Activated CD8-positive, alpha-beta T cell treated with anti-CD3 and anti-CD28 coated beads, Interleukin-2, amount 10 ng/mL, durations not matched to agents 7 days and 5 days (primary cell): ENCODE measurements at regions of chr22 and their contacts with region 1.

Region 1: DNA sequence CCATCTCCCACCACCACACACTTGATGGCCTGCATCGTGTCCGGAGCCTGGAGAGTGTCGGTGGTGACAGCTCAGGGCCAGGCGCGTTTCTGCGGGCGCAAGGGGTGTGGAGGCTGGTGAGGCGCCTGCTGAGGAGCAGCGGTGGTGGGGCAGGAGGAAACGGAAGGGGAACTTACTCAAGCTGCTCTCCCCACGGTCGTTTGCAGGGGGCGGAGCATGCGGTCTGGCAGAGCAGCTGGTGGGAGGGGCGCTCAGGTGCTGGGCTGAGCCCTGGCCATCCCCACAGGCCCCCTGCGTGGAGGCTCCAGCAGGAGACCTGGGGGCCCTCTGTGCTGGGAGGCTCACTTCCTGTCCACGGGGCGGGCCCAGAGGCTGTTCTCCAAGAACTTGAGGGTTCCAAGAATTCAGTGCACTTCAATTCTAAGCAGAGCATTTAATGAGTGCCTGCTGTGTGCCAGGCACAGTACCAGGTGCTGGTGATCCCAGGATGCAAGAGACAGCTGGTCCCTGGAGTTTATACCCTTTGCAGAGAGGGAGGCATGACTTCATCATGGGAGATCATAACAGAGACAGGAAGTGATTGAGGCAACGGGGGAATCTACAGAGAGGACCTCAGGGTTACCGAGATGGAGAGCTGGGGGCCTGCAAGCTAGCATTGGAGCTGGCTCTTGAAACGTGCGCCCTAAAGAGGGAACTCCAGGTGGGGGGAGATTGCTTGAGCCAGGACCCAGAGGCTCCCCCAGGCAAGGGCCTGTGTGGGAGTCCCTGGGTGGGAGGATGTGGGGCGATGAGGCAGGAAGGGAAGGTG is at the start of gene RAC2:
- DNase-seq: peak; percentile 98
- ATAC-seq: peak; percentile 62
- H3K4me3 Mint-ChIP-seq: peak within 1 kb of the TSS; percentile 99
- H3K27ac Mint-ChIP-seq: peak within 1 kb of the TSS; percentile 99
- H3K4me1 Mint-ChIP-seq: peaks cover 45% of the 10 kb centered on the region
- H3K27me3 Mint-ChIP-seq: no peaks in the 10 kb centered on the region
- total RNA-seq, gene RAC2: 1,167 to 1,252 TPM

Region 2: DNA sequence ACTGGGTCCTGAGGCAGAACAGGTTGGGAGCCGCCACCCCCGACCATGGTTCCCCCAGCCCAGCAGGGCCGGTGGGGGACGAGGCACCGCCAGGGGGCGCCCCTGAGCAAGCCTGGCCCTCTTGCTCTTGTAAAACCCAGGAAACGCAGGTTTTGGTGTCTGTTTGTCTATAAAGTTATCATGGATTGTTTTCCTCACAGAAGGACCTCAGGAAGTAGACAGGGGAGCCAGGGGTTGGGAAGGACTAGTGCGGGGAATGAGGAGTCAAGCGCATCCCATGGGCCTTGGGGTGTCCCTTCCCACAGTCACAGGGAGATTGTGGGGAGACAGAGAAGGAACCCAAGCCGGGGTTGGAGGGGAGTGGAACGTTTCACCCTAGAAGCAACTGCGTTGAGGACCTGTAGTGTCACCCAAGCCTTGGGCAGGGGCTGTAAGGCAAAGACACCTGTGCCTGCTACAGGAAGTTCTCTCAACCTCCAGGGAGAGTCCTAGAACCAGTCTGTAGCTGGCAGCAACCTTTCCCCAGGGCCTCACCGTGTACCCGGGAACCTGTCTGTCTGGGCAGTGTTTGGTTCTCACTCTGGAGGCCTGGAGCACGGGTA is 166.3 kb before region 1 on chr22:
- CTCF ChIA-PET with region 1: interaction called, 5 read pairs
- POLR2A ChIA-PET with region 1: interaction called, 24 read pairs
- DNase-seq: peak; percentile 89
- ATAC-seq: peak; percentile 20
- H3K4me3 Mint-ChIP-seq: peak overlapping the region; percentile 72
- H3K27ac Mint-ChIP-seq: peak overlapping the region; percentile 99
- H3K4me1 Mint-ChIP-seq: peaks cover 69% of the 10 kb centered on the region
- H3K27me3 Mint-ChIP-seq: no peaks in the 10 kb centered on the region

Region 3: DNA sequence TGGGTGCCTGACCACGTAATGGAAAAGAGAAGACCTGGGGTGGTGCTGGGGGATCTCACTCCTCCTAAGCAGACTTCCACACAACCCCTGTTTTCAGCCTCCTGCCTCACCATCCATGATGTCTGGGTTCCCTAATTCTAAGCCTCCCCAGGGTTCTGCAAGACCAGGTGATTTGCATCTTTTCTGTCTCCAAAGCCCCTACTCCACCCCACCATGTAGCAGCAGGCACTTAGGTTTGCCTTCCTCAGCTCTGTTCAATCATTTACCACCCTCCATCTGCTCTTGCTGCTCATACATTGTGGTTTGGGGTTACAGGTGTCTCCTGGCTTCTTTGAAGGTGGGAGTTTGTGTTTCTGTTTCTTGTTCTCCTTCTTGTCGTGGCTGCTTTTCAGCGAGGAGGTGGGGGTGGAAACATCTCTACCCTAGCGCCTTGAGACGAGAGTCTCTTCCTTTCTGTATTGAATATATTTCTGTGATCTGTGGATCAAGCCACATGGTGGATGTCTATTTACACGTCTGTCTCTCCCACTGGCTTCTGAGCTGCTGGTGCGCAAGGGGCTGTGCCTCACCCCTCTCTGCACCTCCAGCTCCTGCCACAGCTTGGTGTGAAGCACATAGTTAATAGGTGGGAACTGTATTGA is 25.4 kb before region 1 on chr22:
- CTCF ChIA-PET with region 1: interaction called, 12 read pairs
- POLR2A ChIA-PET with region 1: interaction called, 249 read pairs
- DNase-seq: peak; percentile 86
- ATAC-seq: peak; percentile 76
- H3K4me3 Mint-ChIP-seq: peak overlapping the region; percentile 66
- H3K27ac Mint-ChIP-seq: peak overlapping the region; percentile 87
- H3K4me1 Mint-ChIP-seq: peaks cover 80% of the 10 kb centered on the region
- H3K27me3 Mint-ChIP-seq: no peaks in the 10 kb centered on the region

Region 4: DNA sequence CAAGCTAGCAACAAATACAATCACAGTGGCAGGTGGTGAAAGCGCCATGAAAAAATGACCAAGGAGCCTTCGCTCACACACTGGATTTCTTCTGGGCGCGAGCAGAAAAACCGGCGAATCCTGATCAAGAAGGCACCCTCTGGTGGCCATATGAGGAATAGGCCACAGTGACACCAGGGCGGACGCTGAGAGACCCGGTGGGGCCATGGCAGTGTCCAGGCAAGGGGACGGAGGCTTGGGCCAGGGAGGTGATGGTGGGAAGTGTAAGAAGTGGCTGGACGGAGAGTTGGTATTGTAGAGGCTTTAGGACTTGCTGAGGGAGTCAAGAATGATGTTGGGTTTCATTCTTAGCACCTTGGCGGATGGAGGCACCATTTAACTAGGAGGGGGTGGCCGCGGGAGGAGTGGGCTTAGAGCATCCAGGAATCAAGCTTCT is 16.6 kb after region 1 on chr22:
- CTCF ChIA-PET with region 1: interaction called, 195 read pairs
- POLR2A ChIA-PET with region 1: interaction called, 50 read pairs
- DNase-seq: peak; percentile 75
- ATAC-seq: peak; percentile 73
- H3K4me3 Mint-ChIP-seq: no peak overlapping the region
- H3K27ac Mint-ChIP-seq: peak overlapping the region; percentile 50
- H3K4me1 Mint-ChIP-seq: peaks cover 26% of the 10 kb centered on the region
- H3K27me3 Mint-ChIP-seq: peaks cover 4% of the 10 kb centered on the region

Region 5: DNA sequence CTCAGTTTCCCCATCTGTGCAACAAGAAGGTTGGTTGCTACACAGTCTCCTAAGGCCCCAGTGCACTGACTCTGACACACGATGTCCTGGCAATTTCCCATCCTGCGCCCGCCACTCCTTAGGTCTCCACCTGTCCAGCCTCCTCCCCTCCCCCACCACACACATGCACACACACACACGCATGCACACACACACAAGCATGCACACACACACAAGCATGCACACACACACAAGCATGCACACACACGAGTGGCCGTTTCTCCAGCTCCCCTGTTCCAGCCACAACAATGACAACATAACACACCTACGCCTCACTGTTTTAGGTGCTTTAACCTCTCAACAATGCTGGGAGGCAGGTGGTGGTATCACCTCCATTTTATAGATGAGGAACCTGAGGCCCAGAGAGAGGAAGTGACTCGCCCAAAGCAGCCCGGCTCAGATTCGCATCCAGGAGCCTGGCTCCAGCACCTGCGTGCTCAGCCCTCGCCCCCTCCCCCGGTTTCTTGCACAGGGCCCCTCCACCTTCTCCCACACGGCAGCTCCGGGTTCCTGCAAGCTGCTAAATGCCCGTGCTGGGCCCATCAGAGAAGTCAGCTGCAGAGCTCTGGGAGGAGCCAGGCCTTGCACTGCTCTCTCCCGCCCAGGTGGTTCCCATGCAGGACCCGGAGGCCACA is 51.0 kb after region 1 on chr22:
- CTCF ChIA-PET with region 1: interaction called, 3 read pairs
- POLR2A ChIA-PET with region 1: interaction called, 12 read pairs
- DNase-seq: peak; percentile 34
- ATAC-seq: peak; percentile 29
- H3K4me3 Mint-ChIP-seq: no peak overlapping the region
- H3K27ac Mint-ChIP-seq: peak overlapping the region; percentile 78
- H3K4me1 Mint-ChIP-seq: peaks cover 90% of the 10 kb centered on the region
- H3K27me3 Mint-ChIP-seq: no peaks in the 10 kb centered on the region

Region 6: DNA sequence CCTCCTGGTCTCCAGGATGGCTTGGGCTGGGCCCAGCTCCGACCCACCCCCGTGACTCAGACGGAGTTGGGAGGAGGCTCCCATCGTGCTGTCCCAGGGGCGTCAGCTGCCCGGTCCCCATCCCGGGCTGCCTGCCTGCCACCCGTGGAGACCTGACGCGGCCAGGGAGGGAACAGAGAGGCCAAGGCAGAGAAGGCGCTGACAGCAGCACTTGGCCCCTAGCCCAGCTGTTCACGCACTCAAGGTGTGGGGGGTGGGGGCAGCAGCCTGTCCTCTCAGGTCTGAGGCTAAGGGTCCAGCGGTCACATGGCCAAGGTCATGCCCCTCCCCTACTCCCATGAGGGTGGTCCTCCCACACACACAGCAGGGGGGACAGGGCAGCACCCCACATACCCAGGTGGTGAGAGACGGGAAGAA is 134.3 kb after region 1 on chr22:
- CTCF ChIA-PET with region 1: no interaction called
- POLR2A ChIA-PET with region 1: no interaction called
- DNase-seq: no peak
- ATAC-seq: no peak
- H3K4me3 Mint-ChIP-seq: no peak overlapping the region
- H3K27ac Mint-ChIP-seq: no peak overlapping the region
- H3K4me1 Mint-ChIP-seq: no peaks in the 10 kb centered on the region
- H3K27me3 Mint-ChIP-seq: peaks cover 18% of the 10 kb centered on the region

Region 7: DNA sequence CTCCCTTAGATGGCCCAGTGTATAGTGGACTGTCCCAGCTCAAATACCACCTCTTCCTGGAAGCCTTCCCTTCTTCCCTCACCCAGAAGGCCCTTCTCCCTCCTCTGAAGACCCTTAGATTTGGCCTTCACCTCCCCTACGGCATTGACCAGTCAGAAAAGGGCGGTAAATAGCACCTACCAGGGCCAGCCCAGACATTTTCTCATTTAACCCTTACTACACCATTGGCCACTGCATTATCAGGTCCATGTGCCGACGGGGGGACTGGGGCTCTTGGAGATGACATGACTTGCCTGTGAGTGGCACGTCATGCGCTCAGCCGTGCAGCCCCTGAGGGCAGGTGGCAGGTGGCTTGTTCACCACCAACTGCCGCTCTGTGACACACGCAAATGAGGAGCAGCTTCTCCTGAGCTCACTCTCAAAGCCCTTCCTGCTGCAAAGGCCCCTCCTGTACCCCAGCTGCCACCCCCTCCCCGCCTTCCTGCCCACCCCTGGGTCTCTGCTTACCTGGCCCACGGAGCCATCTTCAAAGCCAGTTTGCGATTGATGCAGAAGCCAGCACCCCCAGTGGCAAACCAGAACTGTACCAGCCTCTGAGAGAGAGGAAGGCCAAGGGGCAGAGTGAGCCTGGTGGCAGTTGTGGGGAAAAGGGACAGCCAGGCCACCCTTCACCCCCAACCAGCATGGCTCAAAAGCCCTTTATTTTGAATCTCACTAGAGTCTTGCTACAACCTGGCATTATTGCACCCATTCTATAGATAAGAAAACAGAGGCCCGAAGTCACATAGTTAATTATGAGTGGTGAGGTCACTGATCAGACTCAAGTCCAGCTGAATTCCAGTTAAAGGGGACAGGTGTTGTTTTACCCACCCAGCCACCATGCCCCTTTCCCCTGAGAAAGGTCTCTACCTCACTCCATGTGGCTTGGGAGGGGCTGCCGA is 232.3 kb after region 1 on chr22:
- CTCF ChIA-PET with region 1: no interaction called
- POLR2A ChIA-PET with region 1: no interaction called
- DNase-seq: no peak
- ATAC-seq: no peak
- H3K4me3 Mint-ChIP-seq: no peak overlapping the region
- H3K27ac Mint-ChIP-seq: peak overlapping the region; percentile 49
- H3K4me1 Mint-ChIP-seq: peaks cover 30% of the 10 kb centered on the region
- H3K27me3 Mint-ChIP-seq: no peaks in the 10 kb centered on the region